HCT116 (cell line): ENCODE measurements at regions of chr7 and their contacts with region 1.

Region 1: DNA sequence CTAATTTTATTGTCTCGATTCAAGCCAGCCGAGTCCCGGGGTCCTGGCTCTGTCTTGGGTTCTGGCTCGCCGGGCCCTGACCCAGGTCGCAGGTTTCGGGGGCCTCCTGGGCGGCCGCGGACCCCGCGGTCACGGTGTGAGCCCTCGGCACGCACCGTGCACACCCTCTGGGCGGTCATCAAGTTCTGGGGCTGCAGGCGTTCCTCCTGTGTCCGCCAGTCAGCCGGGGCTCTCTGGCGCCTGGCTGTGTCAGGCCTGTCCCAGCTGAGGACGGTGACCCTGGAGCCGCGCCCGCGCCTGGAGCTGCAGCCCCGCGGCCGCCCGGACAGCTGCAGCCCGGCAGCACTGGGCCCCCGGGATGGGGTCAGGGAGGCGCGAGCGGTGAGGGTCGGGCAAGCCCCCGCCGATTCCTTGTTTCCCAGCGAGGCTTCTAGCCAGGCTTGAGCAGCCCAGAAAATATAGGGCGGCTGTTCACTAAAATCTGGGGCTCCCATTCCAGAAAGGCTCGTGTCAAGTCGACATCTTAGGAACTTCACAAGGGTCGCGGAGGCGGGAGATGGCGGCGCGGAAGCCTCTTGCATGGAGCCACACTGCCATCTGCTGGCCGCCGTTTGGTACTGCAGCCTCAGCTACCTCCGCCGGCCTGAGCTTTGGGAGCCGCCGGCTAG is 4.2 kb upstream of the HOXA7 start:
- DNase-seq: no peak
- ATAC-seq: peak; percentile 41
- H3K4me3 ChIP-seq: peak overlapping the region; percentile 49 to 77
- H3K27ac ChIP-seq: peak overlapping the region; percentile 91
- H3K4me1 ChIP-seq: peaks cover 14 to 53% of the 10 kb centered on the region in 2 experiments
- H3K27me3 ChIP-seq: no peaks in the 10 kb centered on the region
- CTCF ChIP-seq: peak in 2 of 3 experiments; percentile 89 to 95; a peak in 4 of 6 replicates
- POLR2A ChIP-seq: no peak
- RAD21 ChIP-seq: no peak

Region 2: GRCh38 chr7:25565949-25566348 is 1594.7 kb before region 1 on chr7:
- CTCF ChIA-PET with region 1: no interaction called
- POLR2A ChIA-PET with region 1: no interaction called
- RAD21 ChIA-PET with region 1: no interaction called
- intact Hi-C with region 1: loop called (anchors 5 kb)
- DNase-seq: peak; percentile 44
- ATAC-seq: no peak
- H3K4me3 ChIP-seq: no peak overlapping the region
- H3K27ac ChIP-seq: no peak overlapping the region
- H3K4me1 ChIP-seq: peaks cover 0 to 8% of the 10 kb centered on the region in 2 experiments; a peak in 1 of 4 replicates
- H3K27me3 ChIP-seq: peaks cover 41% of the 10 kb centered on the region
- CTCF ChIP-seq: peak; percentile 99 to 100 (median 100)
- POLR2A ChIP-seq: no peak
- RAD21 ChIP-seq: peak; percentile 86

Region 3: GRCh38 chr7:25894902-25895791 is 1265.5 kb before region 1 on chr7:
- CTCF ChIA-PET with region 1: interaction called, 17 read pairs
- POLR2A ChIA-PET with region 1: no interaction called
- RAD21 ChIA-PET with region 1: no interaction called
- intact Hi-C with region 1: loop called (anchors 1 kb)
- DNase-seq: peak; percentile 18
- ATAC-seq: peak; percentile 74
- H3K4me3 ChIP-seq: peak overlapping the region; percentile 18 to 24
- H3K27ac ChIP-seq: peak overlapping the region; percentile 26; the same call in 1 of the 2 replicates
- H3K4me1 ChIP-seq: peaks cover 6 to 28% of the 10 kb centered on the region in 2 experiments; a peak in 3 of 4 replicates
- H3K27me3 ChIP-seq: no peaks in the 10 kb centered on the region
- CTCF ChIP-seq: peak; percentile 49 to 86 (median 78); a peak in 5 of 6 replicates
- POLR2A ChIP-seq: no peak
- RAD21 ChIP-seq: peak; percentile 40; the same call in 1 of the 2 replicates

Region 4: GRCh38 chr7:26200444-26201246 is 960.0 kb before region 1 on chr7 and contains the start of gene HNRNPA2B1:
- CTCF ChIA-PET with region 1: no interaction called
- POLR2A ChIA-PET with region 1: no interaction called
- RAD21 ChIA-PET with region 1: no interaction called
- intact Hi-C with region 1: loop called (anchors 5 kb)
- DNase-seq: peak; percentile 95
- ATAC-seq: peak; percentile 78
- H3K4me3 ChIP-seq: peak within 1 kb of the TSS; percentile 68 to 93
- H3K27ac ChIP-seq: peak within 1 kb of the TSS; percentile 97
- H3K4me1 ChIP-seq: peaks cover 13 to 39% of the 10 kb centered on the region in 2 experiments
- H3K27me3 ChIP-seq: no peaks in the 10 kb centered on the region
- CTCF ChIP-seq: no peak
- POLR2A ChIP-seq: peak; percentile 99
- RAD21 ChIP-seq: no peak
- total RNA-seq, gene HNRNPA2B1: 870 TPM

Region 5: GRCh38 chr7:26667500-26668133 is 493.1 kb before region 1 on chr7:
- CTCF ChIA-PET with region 1: interaction called, 10 read pairs
- POLR2A ChIA-PET with region 1: no interaction called
- RAD21 ChIA-PET with region 1: no interaction called
- intact Hi-C with region 1: loop called (anchors 1 kb)
- DNase-seq: peak; percentile 94
- ATAC-seq: peak; percentile 100
- H3K4me3 ChIP-seq: no peak overlapping the region
- H3K27ac ChIP-seq: no peak overlapping the region
- H3K4me1 ChIP-seq: 0 out of 4 replicates have a peak, but pooled peaks cover 0 to 2% of the 10 kb centered on the region in 2 experiments
- H3K27me3 ChIP-seq: no peaks in the 10 kb centered on the region
- CTCF ChIP-seq: peak; percentile 82 to 99 (median 96)
- POLR2A ChIP-seq: no peak
- RAD21 ChIP-seq: peak; percentile 100

Region 6: GRCh38 chr7:26686448-26686981 is 474.2 kb before region 1 on chr7:
- CTCF ChIA-PET with region 1: interaction called, 14 read pairs
- POLR2A ChIA-PET with region 1: interaction called, 4 read pairs
- RAD21 ChIA-PET with region 1: interaction called, 3 read pairs
- intact Hi-C with region 1: loop called (anchors 1 kb)
- DNase-seq: peak; percentile 21
- ATAC-seq: peak; percentile 78
- H3K4me3 ChIP-seq: no peak overlapping the region
- H3K27ac ChIP-seq: no peak overlapping the region
- H3K4me1 ChIP-seq: peaks cover 4 to 11% of the 10 kb centered on the region in 2 experiments; a peak in 3 of 4 replicates
- H3K27me3 ChIP-seq: no peaks in the 10 kb centered on the region
- CTCF ChIP-seq: peak; percentile 53 to 72 (median 66)
- POLR2A ChIP-seq: no peak
- RAD21 ChIP-seq: peak; percentile 71

Region 7: DNA sequence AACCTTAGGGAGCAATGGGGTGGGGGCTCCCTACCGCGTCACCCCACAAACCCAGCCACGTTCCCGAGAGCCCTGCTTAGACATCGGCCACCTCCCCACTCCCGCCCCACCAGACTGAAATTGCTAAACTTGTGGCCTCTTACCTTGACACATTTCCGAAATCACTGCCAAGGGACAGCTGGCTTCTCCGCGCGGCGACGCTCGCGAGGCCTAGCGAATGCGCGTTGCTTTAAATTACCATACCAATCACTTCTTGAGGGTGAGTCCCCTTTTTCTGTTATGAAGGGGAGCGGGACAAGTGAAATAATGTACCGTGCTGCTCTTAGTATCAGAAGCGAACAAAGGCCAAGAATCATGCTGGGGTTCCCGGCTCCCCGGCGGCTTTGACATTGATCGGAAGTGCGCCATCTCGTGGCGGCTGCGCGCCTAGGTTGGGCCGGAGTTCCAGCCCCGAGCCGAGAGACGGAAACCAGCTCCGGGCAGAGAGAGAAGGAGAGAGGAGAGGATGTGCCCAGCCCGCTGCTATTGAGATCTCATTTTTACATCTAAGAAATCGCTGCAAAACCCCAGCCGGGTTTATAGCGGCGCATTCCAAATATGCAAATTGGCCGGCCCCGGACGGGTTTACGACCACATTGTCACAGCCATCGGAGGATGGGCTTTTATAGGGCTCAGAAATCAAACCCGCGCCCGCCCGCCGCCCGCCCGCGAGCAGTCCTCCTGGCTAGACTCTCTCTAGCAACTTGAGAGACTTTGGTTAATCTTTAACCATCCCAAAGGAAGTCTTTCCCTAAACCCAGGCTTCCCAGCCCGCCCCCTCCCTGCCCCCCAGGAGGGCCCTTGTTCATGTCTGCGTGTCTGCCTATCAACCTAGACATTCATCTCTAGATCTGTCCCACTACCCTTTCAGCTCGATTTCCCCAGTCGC is 19.1 kb after region 1 on chr7:
- CTCF ChIA-PET with region 1: interaction called, 32 read pairs
- POLR2A ChIA-PET with region 1: no interaction called
- RAD21 ChIA-PET with region 1: no interaction called
- intact Hi-C with region 1: no loop called
- DNase-seq: no peak
- ATAC-seq: peak; percentile 79
- H3K4me3 ChIP-seq: peak overlapping the region; percentile 43 to 56
- H3K27ac ChIP-seq: peak overlapping the region; percentile 38; the same call in 1 of the 2 replicates
- H3K4me1 ChIP-seq: peaks cover 30 to 51% of the 10 kb centered on the region in 2 experiments
- H3K27me3 ChIP-seq: no peaks in the 10 kb centered on the region
- CTCF ChIP-seq: peak; percentile 80 to 97 (median 93)
- POLR2A ChIP-seq: no peak
- RAD21 ChIP-seq: no peak; the same call in 1 of the 2 replicates